ENCODE measurements at regions of chr1 and their contacts with region 1.

Region 1: DNA sequence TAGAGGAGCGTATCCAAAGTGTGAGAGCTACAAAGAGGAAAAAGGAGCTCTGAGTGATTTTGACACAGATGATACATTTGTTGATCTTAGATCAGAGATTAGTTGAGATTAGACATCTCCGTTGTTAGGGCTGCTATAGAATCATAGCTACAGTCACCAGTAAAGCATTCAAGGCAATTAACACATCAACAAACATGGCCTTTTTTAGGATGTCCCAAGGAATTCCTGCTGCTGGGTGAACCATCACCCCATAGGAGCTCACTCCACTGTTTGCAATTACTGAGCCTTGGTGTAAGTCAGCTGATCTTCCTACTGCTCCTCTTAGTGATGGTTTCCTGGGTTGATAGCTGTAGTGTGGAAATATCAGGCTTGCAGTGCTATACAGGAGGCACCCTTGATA is 6.7 kb upstream of the RSRP1 start:
- DNase-seq: no peak
- H3K4me3 ChIP-seq: no peak overlapping the region
- H3K27ac ChIP-seq: no peak overlapping the region
- H3K4me1 ChIP-seq: no peaks in the 10 kb centered on the region
- H3K27me3 ChIP-seq: no peaks in the 10 kb centered on the region
- CTCF ChIP-seq: no peak
- EP300 ChIP-seq: no peak
- POLR2A ChIP-seq: no peak

Region 2: DNA sequence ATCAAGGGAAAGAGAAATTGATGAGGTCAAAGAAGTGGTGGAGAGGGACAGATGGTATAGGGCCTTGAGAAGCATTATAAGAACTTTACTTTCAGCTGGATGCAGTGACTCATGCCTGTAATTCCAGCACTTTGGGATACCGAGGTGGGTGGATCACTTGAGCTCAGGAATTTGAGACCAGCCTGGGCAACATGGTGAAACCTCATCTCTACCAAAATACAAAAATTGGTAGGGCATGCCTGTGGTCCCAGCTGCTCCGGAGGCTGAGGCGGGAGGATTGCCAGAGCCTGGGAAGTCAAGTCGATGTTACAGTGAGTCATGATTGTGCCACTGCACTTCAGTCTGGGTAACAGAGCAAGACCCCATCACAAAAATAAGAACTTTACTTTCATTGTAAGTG is 90.0 kb after region 1 on chr1:
- intact Hi-C with region 1: loop called in 1 of 4 experiments (anchors 10 kb)
- DNase-seq: no peak
- H3K4me3 ChIP-seq: no peak overlapping the region
- H3K27ac ChIP-seq: no peak overlapping the region
- H3K4me1 ChIP-seq: peaks cover 5% of the 10 kb centered on the region
- H3K27me3 ChIP-seq: no peaks in the 10 kb centered on the region
- CTCF ChIP-seq: no peak
- EP300 ChIP-seq: no peak
- POLR2A ChIP-seq: no peak